Dorsolateral prefrontal cortex (tissue), 120 donors: ENCODE measurements at regions of chr7 and their contacts with region 1.

Region 1: GRCh38 chr7:76166404-76167255 is 35.1 kb upstream of the SRRM3 start:
- DNase-seq: peak; percentile 96 to 98 (median 97)
- H3K4me3 ChIP-seq: peak overlapping the region; percentile 53 to 97 (median 83)
- H3K27ac ChIP-seq: peak overlapping the region; percentile 32 to 97 (median 89)
- H3K27me3 ChIP-seq: no peaks in the 10 kb centered on the region
- CTCF ChIP-seq: peak in 53 of 56 donors; percentile 22 to 70 (median 49)

Region 2: GRCh38 chr7:75878769-75879611 is 287.6 kb before region 1 on chr7 and contains the start of gene RHBDD2:
- intact Hi-C with region 1: loop called in 1 of 2 experiments (anchors 10 kb)
- DNase-seq: peak; percentile 88 to 96 (median 95)
- H3K4me3 ChIP-seq: peak within 1 kb of the TSS; percentile 70 to 99 (median 95)
- H3K27ac ChIP-seq: peak within 1 kb of the TSS; percentile 73 to 99 (median 96)
- H3K27me3 ChIP-seq: no peaks in the 10 kb centered on the region
- CTCF ChIP-seq: peak in 50 of 56 donors; percentile 10 to 67 (median 40)
- total RNA-seq, gene RHBDD2: 127 to 309 (median 221) TPM

Region 3: DNA sequence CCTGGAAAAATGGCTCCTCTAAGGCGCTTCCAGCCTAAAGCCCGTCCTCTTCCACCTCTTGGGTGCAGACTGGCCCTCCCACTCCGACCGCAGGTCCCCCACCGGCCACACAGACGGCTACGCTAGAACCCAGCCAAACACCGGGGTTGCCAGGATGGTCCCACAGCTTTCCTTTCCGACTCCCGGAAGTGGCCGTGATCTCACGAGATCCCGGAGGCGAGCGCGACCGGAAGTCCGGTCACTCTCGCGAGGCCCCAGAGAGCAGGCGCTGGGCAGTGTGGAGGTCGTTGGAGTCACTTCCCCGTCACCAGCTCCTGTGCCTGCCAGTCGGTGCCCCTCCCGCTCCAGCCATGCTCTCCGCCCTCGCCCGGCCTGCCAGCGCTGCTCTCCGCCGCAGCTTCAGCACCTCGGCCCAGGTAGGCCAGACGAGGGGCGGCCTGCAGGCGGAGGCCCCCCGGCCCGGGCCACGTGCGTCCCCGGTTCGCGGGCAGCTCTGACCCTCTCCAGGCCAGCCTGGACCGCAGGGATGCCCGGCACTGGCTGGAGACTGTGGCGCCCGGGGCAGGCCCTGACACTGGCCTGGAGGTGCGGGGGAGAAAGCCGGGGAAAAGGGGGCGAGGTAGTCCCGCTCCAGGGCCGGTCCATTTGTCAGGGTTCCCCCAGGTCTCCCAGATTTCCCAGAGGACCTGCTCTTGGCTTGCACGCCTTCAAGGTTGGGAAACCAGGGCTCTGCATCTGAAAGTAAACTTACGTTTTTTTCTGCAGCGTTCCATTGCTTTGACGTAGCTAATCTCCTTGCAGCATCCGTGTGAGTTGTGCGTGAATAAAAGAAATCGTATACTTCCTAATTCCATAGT is 118.6 kb before region 1 on chr7 and contains the starts of genes MDH2 and STYXL1:
- intact Hi-C with region 1: loop called in 1 of 2 experiments (anchors 10 kb)
- DNase-seq: peak; percentile 82 to 96 (median 92)
- H3K4me3 ChIP-seq: peak within 1 kb of the TSS; percentile 73 to 100 (median 96)
- H3K27ac ChIP-seq: peak within 1 kb of the TSS; percentile 7 to 96 (median 82)
- H3K27me3 ChIP-seq: no peaks in the 10 kb centered on the region
- CTCF ChIP-seq: peak in 25 of 56 donors; percentile 10 to 47 (median 25)
- total RNA-seq, gene MDH2: 88.3 to 247 (median 161) TPM
- total RNA-seq, gene STYXL1: 16.2 to 49.4 (median 30.6) TPM

Region 4: DNA sequence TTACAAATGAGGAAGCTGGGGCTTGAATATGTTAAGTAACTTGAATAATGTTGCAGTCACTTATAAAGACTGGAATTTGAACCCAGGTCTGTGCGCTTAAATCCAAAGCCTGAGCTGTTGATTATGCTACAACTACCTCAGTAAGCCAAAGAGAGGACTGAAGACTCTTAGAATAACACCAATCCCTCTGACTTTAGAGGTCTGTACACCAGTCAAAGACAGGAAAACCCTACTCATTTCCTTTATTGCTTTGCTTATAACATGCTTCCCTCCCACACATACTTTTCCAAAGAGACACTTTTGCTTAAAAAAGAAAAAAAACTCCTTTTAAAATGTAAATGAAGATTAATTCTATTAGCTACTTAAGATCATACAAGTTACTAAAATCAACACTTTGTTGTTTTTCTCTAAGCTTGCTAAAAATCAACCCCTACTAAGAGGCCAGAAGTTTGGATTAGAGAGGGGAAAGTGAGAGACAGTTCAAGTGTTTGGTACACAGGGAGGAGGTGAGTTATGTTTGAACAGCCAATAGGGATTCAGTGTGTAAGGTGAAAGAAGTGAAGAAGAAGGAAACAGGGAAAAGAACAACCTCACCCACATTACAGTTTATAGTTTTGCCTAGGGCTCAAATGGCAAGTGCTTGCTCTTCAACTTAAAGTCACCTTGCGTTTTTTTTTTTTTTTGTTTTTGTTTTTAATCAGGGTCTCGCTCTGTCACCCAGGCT is 44.0 kb before region 1 on chr7:
- intact Hi-C with region 1: no loop called
- DNase-seq: no peak
- H3K4me3 ChIP-seq: no peak overlapping the region
- H3K27ac ChIP-seq: no peak overlapping the region
- H3K27me3 ChIP-seq: no peaks in the 10 kb centered on the region
- CTCF ChIP-seq: no peak